Gastrocnemius medialis (tissue), 4 donors: ENCODE measurements at regions of chr14 and their contacts with region 1.

Region 1: DNA sequence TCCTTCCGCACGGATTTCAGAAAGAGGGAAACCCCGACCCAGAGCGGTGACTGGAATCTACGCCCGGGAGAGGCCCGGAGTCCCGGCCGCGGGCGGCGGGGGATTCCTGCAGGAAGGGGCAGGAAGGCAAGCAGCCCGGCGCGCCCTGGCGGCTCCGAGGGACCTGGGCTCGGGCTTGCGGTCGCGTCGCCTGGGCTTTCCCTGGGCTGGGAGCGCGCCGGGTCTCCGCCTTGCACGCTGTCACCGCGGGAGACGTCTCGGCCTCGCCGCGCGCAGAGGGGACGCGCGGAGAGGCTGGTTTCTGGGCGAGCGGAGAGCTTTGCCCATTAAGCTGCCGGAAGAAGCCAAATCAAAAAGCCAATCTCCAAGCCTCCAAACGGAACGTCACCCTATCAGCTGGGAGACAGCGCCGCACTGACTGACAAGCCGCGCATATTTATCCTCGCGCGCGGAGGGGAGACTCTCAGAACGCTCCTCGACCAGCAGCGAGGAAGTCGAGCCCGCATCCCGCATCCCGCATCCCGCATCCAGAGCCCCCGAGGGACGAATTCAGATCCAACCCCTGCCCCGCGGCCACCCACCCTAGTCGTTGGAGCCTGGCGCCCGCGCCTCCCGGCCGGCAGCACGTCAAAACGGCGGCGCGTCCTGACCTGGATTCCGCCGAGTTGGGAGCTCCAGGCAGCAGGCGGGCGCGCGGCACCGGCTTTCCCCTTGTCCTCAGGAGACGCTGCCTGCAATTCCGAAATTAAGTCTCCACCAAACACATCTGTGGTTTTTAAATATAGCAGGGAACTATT is at the start of gene SLC8A3:
- DNase-seq: peak; percentile 81 to 83
- ATAC-seq: peak; percentile 79 to 83
- H3K4me3 ChIP-seq: peak within 1 kb of the TSS; percentile 61 to 84 (median 74)
- H3K27ac ChIP-seq: peak within 1 kb of the TSS; percentile 92 to 95 (median 94)
- H3K4me1 ChIP-seq: peaks cover 28 to 42% of the 10 kb centered on the region in 2 donors
- H3K27me3 ChIP-seq: no peaks in the 10 kb centered on the region
- CTCF ChIP-seq: no peak
- POLR2A ChIP-seq: peak; percentile 87 to 95
- total RNA-seq, gene SLC8A3: 8.5 to 14.1 (median 12.6) TPM

Region 2: DNA sequence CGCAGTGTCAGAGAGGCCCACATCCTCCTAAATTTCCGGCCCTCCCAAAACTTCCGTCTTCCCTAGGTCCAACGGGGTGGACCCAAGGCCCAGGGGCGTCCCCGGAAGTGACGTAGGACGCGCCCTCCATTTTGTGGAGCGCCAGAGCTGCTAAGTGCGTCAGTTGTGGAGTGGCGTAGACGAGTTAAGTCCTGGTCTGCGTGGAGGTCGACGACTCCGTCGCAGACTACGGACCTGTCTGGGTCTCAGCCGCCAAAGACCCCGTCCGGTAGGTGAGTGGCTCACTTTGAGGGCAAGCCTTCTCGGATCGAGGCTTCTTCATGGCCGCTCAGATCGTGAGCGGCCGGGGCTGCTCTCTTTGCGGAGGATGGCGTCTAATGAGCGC is 421.9 kb before region 1 on chr14 and contains the start of gene SRSF5:
- in situ Hi-C with region 1: no loop called
- intact Hi-C with region 1: loop called (anchors 2 kb)
- DNase-seq: peak; percentile 94 to 95
- ATAC-seq: peak; percentile 95
- H3K4me3 ChIP-seq: peak within 1 kb of the TSS; percentile 79 to 99 (median 92)
- H3K27ac ChIP-seq: peak within 1 kb of the TSS; percentile 97 to 100 (median 99)
- H3K4me1 ChIP-seq: peaks cover 34 to 36% of the 10 kb centered on the region in 2 donors
- H3K27me3 ChIP-seq: no peaks in the 10 kb centered on the region
- CTCF ChIP-seq: no peak
- POLR2A ChIP-seq: peak; percentile 95 to 97
- total RNA-seq, gene SRSF5: 57.5 to 113 (median 84.6) TPM

Region 3: DNA sequence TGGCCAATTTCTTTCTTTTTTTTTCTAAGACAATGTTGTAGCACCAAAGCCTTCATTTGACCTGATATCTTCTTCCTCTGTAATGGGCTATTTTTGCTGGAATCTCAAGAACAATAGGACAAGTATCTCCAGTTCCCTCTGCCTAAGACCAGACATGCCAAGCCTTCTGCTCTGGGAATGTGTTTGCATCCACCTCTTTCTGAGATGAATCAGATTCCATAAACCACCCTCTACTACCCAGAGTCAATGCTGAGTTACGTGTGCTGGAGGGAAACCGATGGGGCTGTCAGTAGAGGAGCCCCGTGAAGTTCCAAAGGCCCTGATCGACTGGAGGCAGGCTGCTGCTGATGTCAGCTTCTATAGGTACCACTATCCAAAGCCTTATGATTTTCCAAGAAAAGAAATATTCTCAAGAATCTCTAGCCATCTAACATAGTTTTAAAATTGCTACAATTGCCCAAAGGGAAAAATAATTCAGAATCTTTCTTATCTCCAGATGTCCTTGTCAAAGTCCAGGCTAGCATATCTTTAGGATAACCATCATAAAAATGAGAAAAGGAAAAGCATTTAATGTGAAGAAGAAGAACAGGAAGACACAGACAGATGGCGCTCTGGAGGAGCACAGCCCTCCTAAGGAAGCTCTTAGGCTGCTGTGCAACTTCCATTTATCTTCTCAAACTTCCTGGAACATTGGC is 102.0 kb before region 1 on chr14:
- in situ Hi-C with region 1: no loop called
- intact Hi-C with region 1: loop called (anchors 1 kb)
- DNase-seq: no peak
- ATAC-seq: peak in 1 of 2 donors; percentile 64
- H3K4me3 ChIP-seq: no peak overlapping the region
- H3K27ac ChIP-seq: no peak overlapping the region
- H3K4me1 ChIP-seq: peaks cover 10 to 19% of the 10 kb centered on the region in 2 donors
- H3K27me3 ChIP-seq: no peaks in the 10 kb centered on the region
- CTCF ChIP-seq: peak in 4 of 5 experiments; percentile 24 to 44 (median 29)
- POLR2A ChIP-seq: no peak

Region 4: GRCh38 chr14:70156592-70156991 is 32.3 kb before region 1 on chr14:
- in situ Hi-C with region 1: no loop called
- intact Hi-C with region 1: loop called (anchors 2 kb)
- DNase-seq: peak; percentile 28 to 66
- ATAC-seq: peak; percentile 97 to 98
- H3K4me3 ChIP-seq: no peak overlapping the region
- H3K27ac ChIP-seq: peak overlapping the region; percentile 47 to 53 (median 50)
- H3K4me1 ChIP-seq: peaks cover 22 to 33% of the 10 kb centered on the region in 2 donors
- H3K27me3 ChIP-seq: no peaks in the 10 kb centered on the region
- CTCF ChIP-seq: no peak
- POLR2A ChIP-seq: no peak

Region 5: DNA sequence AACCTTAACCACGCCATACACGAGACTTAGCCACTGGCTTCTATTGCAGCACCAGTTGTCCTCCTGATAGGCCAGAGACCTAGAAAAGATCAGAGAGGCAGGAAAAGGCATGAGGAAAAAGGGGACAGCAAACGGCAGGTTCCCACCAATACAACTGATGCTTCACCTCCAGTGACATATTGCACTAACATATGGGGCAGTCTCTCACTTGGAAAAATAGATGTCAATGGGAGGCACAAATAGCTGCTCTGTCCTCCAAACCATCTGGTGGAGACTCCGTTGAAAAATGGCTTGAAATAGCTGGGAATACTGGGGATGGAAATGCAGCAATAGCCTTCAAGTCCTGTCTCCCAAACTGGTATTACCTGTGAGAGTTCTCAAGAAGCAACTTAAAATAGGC is 20.5 kb before region 1 on chr14:
- in situ Hi-C with region 1: no loop called
- intact Hi-C with region 1: no loop called
- DNase-seq: no peak
- ATAC-seq: no peak
- H3K4me3 ChIP-seq: no peak overlapping the region
- H3K27ac ChIP-seq: no peak overlapping the region
- H3K4me1 ChIP-seq: peaks cover 2 to 13% of the 10 kb centered on the region in 2 donors
- H3K27me3 ChIP-seq: no peaks in the 10 kb centered on the region
- CTCF ChIP-seq: no peak
- POLR2A ChIP-seq: no peak